ENCODE measurements at regions of chr10 and their contacts with region 1.

Region 1: GRCh38 chr10:77391605-77392235 is 245.9 kb downstream of the KCNMA1 start:
- DNase-seq: peak; percentile 85
- H3K4me3 ChIP-seq: no peak overlapping the region
- H3K27ac ChIP-seq: no peak overlapping the region
- H3K4me1 ChIP-seq: no peaks in the 10 kb centered on the region
- H3K27me3 ChIP-seq: no peaks in the 10 kb centered on the region
- CTCF ChIP-seq: peak; percentile 28

Region 2: DNA sequence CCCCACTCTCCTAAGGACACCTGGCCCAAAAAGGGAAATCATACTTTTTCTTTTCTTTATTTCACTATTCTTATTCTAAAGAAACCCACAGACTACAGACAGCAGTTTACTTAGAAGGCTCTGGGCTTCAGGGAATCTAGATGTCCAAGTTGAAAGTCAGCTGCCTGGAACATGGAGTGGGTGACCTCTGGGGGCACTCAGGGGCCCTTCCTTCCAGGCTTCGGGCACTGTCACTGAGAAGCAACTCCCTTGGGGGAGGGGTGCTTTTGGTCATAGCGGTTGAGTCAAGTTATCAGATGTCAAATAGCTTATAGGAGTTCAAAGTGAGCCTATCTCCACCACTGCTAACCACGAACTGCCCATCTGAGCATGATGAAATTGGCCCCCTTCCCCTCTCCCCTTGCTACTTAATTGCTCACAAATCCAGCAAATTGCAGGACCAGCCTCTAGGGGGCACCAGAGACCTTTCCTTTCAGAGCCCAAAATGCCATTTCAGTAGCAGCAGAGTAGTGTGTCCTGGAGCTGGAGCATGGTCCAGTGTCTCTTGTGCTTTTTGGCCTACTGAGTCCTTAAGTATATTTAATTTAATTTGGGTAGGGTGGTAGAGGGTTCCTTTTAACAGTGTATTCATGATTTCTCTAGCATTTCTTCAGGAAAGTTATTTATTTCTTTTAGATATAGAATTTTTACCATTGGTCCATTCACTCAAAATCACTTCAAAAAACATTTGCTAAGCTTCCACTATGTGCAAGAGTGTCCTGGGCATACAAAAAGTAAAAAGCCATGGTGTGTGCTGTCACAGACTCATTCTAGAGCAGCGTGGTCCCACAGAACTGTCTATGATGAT is 217.9 kb before region 1 on chr10:
- intact Hi-C with region 1: loop called (anchors 10 kb)
- DNase-seq: peak; percentile 79
- H3K4me3 ChIP-seq: no peak overlapping the region
- H3K27ac ChIP-seq: no peak overlapping the region
- H3K4me1 ChIP-seq: no peaks in the 10 kb centered on the region
- H3K27me3 ChIP-seq: no peaks in the 10 kb centered on the region
- CTCF ChIP-seq: peak; percentile 89

Region 3: DNA sequence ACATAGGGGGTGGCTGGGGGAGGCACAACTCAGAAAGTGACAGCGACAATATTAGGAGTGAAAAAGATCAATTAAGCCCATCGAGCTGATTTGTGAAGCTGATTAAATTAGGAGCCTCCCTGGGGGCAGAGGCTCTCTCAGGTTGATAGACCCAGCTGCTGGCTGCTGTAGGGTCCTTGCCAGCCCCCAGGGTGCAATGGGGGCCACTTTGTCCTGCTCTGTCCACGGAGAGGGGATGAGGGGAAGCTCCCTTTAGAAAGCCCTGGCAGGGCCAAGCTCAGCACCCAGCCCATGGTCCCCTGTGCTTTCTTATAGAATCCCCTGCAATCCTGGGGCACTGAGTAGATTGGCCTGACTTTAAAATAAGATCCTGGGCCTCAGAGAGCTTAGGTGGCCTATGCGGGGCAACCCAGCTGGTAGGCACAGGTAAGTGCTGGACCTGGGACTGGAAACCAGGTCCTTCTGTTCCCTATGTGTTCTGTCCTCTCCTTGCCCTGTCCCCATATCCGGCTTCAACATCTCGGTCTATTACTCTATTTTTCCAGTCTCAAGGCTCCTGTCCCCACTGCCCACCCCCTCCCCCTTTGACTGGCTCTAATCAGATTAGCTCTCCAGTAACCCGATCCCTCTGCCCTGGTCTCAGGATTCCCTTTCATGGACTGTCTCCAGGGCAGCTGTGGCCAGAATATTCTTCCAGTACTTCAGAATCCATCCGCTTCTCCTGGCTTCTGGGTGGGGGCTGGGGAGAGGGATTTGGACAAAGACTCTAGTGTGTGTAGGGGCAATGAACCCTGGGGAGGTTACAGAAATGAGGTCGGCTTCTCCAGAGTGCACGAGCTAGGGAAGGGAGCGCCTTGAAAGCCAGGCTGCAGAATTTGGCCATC is 901.5 kb after region 1 on chr10:
- intact Hi-C with region 1: no loop called
- DNase-seq: no peak
- H3K4me3 ChIP-seq: no peak overlapping the region
- H3K27ac ChIP-seq: no peak overlapping the region
- H3K4me1 ChIP-seq: no peaks in the 10 kb centered on the region
- H3K27me3 ChIP-seq: no peaks in the 10 kb centered on the region
- CTCF ChIP-seq: no peak

Measured in colonic mucosa (tissue), 4 donors.